ENCODE measurements at regions of chr5 and their contacts with region 1.

Region 1: DNA sequence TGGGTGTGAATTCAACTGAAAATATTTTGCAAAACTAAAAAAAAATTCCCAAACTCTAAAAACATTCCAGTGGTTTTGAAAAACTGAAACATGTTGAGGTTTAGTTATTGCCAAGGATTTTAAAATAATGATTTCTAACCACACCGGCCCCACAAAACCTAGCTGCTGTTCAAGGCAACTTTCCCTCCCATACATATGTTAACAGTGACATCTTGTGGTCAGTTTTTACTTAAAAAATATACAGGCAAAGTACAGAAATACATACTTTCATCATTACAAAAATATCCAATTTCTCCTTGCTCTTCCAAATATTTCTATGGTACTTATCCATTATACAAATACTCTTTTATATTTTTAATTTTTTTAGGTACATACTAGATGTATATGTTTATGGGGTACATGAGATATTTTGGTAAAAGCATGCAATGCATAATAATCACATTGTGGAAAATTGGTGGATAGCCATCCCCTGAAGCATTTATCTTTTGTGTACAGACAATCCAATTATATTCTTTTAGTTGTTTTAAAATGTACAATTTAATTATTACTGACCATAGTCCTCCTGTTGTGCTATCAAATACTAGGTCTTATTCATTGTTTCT is 34.4 kb upstream of the MRPS30 start:
- DNase-seq: peak; percentile 48
- H3K4me3 ChIP-seq: no peak overlapping the region
- H3K27ac ChIP-seq: no peak overlapping the region
- H3K4me1 ChIP-seq: no peaks in the 10 kb centered on the region
- H3K27me3 ChIP-seq: no peaks in the 10 kb centered on the region
- CTCF ChIP-seq: peak in 1 of 2 donors; percentile 21
- POLR2A ChIP-seq: no peak

Region 2: DNA sequence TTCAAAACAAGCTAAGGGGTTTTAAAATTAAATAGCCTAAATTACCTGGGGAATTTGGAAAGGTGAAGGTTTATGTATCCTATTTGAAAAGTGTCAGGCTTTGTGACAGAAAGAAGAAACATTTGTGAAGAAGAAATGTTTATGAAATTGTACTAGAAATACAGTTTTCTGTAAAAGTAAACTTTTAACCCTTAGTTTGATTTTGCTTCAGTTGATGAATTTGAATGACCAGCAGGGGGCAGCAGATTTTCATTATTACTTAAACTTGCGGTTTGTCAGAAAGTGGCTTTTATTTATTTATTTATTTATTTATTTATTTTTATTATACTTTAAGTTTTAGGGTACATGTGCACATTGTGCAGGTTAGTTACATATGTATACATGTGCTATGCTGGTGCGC is 1113.3 kb before region 1 on chr5:
- CTCF ChIA-PET with region 1: interaction called, 10 read pairs
- POLR2A ChIA-PET with region 1: no interaction called
- dilution Hi-C with region 1: no loop called
- intact Hi-C with region 1: loop called (anchors 1 kb)
- DNase-seq: no peak
- H3K4me3 ChIP-seq: no peak overlapping the region
- H3K27ac ChIP-seq: no peak overlapping the region
- H3K4me1 ChIP-seq: no peaks in the 10 kb centered on the region
- H3K27me3 ChIP-seq: no peaks in the 10 kb centered on the region
- CTCF ChIP-seq: peak in 1 of 2 donors; percentile 18
- POLR2A ChIP-seq: no peak

Region 3: DNA sequence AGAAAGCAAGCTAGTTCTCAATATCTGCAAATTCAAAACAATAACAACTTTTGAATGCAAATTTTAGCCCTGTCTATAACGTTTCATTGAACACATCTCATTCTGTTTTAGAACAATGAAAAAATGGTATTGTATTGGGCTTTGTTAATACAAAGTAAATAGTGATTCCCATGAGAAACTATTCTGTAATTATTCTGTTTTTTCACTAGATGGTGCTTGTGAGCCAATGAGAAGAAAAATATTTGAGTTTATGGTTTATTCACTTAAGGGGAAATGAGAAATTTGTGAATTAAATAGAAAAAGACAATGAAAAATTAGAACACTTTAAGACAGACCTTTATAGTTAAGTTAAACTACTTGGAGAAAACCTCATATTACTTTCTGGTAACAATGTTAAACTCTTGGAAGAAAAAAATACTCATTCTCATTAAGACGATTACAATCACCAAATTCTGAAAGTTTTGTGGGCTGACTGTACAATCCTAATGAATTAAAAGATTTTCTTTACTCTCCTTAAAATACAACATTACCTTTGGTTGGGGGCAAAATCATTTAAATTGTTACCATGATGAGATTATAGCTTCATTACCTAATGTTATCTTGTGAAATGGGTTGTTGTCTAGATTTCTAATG is 1044.4 kb before region 1 on chr5:
- CTCF ChIA-PET with region 1: interaction called, 26 read pairs
- POLR2A ChIA-PET with region 1: no interaction called
- dilution Hi-C with region 1: no loop called
- intact Hi-C with region 1: loop called (anchors 1 kb)
- DNase-seq: peak; percentile 18
- H3K4me3 ChIP-seq: no peak overlapping the region
- H3K27ac ChIP-seq: no peak overlapping the region
- H3K4me1 ChIP-seq: no peaks in the 10 kb centered on the region
- H3K27me3 ChIP-seq: peaks cover 2 to 7% of the 10 kb centered on the region in 2 experiments
- CTCF ChIP-seq: peak; percentile 16 to 20
- POLR2A ChIP-seq: no peak

Region 4: DNA sequence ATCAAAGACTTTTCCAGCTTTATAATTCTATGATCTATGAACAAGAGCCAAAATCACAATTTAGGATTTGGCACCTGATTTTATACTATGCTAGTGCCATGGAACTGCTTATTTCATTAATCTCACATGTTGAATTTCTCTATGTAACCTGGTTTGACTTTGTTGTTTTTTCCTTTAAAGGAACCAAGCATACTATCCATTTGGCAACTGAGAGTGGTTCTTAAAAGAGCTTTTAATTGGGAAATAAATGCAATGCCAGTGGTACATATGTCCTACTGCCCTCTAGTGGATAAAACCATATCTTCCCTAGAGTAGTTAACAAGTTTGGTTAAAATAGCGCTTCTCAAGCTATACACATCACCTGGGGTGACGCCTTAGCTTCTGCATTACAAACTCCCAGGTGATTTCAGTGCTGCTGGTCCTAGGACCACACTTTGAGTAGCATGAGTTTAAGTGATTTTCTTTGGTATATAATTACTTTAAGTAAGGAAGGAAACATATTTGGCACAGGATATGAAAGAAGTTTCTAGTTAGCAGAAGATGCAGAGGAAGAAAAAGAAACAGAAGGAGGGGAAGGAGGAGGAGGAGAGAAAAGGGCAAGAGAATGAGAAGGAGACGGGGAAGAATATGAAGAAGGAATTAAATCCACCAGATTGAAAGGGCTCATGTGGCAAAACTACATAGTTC is 442.0 kb before region 1 on chr5:
- CTCF ChIA-PET with region 1: interaction called, 4 read pairs
- POLR2A ChIA-PET with region 1: no interaction called
- dilution Hi-C with region 1: no loop called
- intact Hi-C with region 1: loop called (anchors 5 kb)
- DNase-seq: peak; percentile 52
- H3K4me3 ChIP-seq: no peak overlapping the region
- H3K27ac ChIP-seq: no peak overlapping the region
- H3K4me1 ChIP-seq: peaks cover 5% of the 10 kb centered on the region
- H3K27me3 ChIP-seq: no peaks in the 10 kb centered on the region
- CTCF ChIP-seq: peak; percentile 49 to 53
- POLR2A ChIP-seq: no peak

Region 5: GRCh38 chr5:44536650-44537260 is 237.6 kb before region 1 on chr5:
- CTCF ChIA-PET with region 1: no interaction called
- POLR2A ChIA-PET with region 1: no interaction called
- dilution Hi-C with region 1: no loop called
- intact Hi-C with region 1: loop called (anchors 1 kb)
- DNase-seq: peak; percentile 28
- H3K4me3 ChIP-seq: no peak overlapping the region
- H3K27ac ChIP-seq: no peak overlapping the region
- H3K4me1 ChIP-seq: no peaks in the 10 kb centered on the region
- H3K27me3 ChIP-seq: no peaks in the 10 kb centered on the region
- CTCF ChIP-seq: peak; percentile 43 to 50
- POLR2A ChIP-seq: no peak

Region 6: DNA sequence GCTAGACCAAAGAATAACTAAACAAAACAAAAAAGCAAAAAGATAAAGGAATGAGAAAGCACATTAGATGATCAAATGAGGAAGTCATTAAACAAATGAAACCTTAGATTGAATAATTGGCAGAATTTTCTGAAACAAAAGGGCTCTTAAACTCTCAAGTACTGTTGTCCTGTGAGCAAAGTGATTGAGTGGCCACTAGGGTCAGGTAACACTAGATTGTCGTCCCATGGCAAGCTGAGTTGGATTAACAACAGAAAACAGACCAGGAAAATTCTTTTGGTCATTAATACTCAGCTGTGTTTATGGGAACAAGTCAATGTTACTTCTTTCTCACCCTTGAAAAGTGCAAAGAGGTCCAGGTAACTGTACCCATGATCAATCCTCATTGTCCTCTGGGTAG is 47.3 kb before region 1 on chr5:
- CTCF ChIA-PET with region 1: no interaction called
- POLR2A ChIA-PET with region 1: no interaction called
- dilution Hi-C with region 1: no loop called
- intact Hi-C with region 1: no loop called
- DNase-seq: no peak
- H3K4me3 ChIP-seq: no peak overlapping the region
- H3K27ac ChIP-seq: no peak overlapping the region
- H3K4me1 ChIP-seq: no peaks in the 10 kb centered on the region
- H3K27me3 ChIP-seq: no peaks in the 10 kb centered on the region
- CTCF ChIP-seq: no peak
- POLR2A ChIP-seq: no peak